K562 (cell line): ENCODE measurements at regions of chr16 and their contacts with region 1.

Region 1: DNA sequence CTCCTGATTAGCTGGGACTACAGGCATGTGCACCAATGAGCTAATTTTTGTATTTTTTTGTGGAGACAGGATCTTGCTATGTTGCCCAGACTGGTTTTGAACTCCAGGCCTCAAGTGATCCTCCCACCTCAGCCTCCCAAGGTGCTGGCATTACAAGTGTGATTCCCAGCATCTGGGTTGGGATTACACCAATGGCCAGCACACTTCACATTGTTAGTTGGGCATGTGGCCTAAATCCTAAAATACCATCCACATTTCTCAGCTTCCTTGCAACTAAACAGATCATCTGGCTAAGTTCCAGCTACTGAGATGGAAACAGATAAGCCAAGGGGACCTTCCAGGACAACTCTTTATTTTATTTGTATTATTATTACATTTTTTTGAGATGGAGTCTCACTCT is 9.9 kb downstream of the RABEP2 start:
- DNase-seq: peak in 1 of 4 experiments; percentile 2
- ATAC-seq: no peak
- H3K4me3 ChIP-seq: no peak overlapping the region
- H3K27ac ChIP-seq: no peak overlapping the region
- H3K4me1 ChIP-seq: peaks cover 0 to 18% of the 10 kb centered on the region in 2 experiments; a peak in 2 of 5 replicates
- H3K27me3 ChIP-seq: no peaks in the 10 kb centered on the region
- CTCF ChIP-seq: no peak
- EP300 ChIP-seq: no peak
- POLR2A ChIP-seq: no peak
- RAD21 ChIP-seq: no peak

Region 2: DNA sequence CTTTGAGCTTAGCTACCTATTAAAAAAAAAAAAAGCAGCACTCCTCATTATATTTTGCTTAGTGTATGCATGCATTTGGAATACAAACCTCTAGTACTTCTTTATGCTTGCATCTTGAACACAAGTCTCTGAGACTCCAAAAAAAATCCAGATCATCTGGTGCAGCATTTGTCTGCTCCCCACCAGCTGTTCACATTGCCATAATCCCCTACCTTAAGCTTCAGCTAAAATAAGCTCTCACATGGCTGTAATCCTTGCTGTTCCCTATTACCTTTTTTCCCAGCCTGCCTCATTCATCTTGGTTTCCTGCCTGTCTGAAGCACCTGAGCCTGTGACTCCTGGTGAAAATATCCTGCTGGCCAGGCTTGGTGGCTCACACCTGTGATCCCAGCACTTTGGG is 28.1 kb after region 1 on chr16:
- CTCF ChIA-PET with region 1: interaction called, 3 read pairs
- POLR2A ChIA-PET with region 1: interaction called, 3 read pairs
- in situ Hi-C with region 1: no loop called
- intact Hi-C with region 1: loop called (anchors 1 kb)
- DNase-seq: no peak
- ATAC-seq: no peak
- H3K4me3 ChIP-seq: no peak overlapping the region
- H3K27ac ChIP-seq: no peak overlapping the region
- H3K4me1 ChIP-seq: peaks cover 6 to 15% of the 10 kb centered on the region in 2 experiments; a peak in 4 of 5 replicates
- H3K27me3 ChIP-seq: no peaks in the 10 kb centered on the region
- CTCF ChIP-seq: no peak
- EP300 ChIP-seq: no peak
- POLR2A ChIP-seq: no peak
- RAD21 ChIP-seq: no peak